ENCODE measurements at regions of chr15 and their contacts with region 1.

Region 1: DNA sequence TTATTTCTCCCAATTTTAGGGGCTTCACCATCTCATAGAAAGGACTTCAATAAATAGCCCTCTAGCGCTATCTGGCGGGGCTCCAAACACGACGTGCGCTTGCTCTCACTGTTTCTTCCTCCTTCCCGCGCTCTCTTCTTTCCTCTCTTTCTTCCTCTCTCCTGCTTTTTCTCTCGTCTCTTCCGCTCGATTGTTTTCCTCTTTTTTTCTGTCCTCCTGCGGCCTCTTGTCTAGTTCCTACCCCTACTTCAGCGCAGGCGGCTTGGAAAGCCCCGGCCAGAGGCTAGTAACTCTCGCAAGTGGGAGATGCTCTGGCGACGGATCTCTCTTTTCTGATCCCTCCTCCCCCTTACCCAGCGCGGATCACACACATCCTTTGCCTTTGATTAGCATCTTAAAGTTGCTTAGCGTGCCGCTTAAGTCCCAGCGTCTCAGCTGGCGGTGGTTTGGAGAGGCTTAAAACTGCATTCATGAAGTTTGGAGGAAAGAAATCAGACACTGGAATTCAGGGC is 6.2 kb upstream of the MEIS2 start:
- DNase-seq: no peak
- H3K4me3 ChIP-seq: peak overlapping the region; percentile 74 to 92
- H3K27ac ChIP-seq: peak overlapping the region; percentile 99
- H3K4me1 ChIP-seq: peaks cover 2 to 10% of the 10 kb centered on the region in 2 experiments; a peak in 2 of 4 replicates
- H3K27me3 ChIP-seq: no peaks in the 10 kb centered on the region
- CTCF ChIP-seq: peak; percentile 61
- EP300 ChIP-seq: no peak
- RAD21 ChIP-seq: peak; percentile 61

Region 2: GRCh38 chr15:37019479-37020433 is 86.8 kb before region 1 on chr15:
- CTCF ChIA-PET with region 1: no interaction called
- POLR2A ChIA-PET with region 1: no interaction called
- DNase-seq: peak; percentile 14
- H3K4me3 ChIP-seq: no peak overlapping the region
- H3K27ac ChIP-seq: peak overlapping the region; percentile 33 to 81
- H3K4me1 ChIP-seq: peaks cover 0 to 34% of the 10 kb centered on the region in 2 experiments; a peak in 3 of 4 replicates
- H3K27me3 ChIP-seq: no peaks in the 10 kb centered on the region
- CTCF ChIP-seq: no peak
- EP300 ChIP-seq: no peak
- RAD21 ChIP-seq: no peak

Region 3: GRCh38 chr15:37093480-37094332 is 12.8 kb before region 1 on chr15:
- CTCF ChIA-PET with region 1: interaction called, 11 read pairs
- POLR2A ChIA-PET with region 1: interaction called, 23 read pairs
- DNase-seq: no peak
- H3K4me3 ChIP-seq: peak overlapping the region; percentile 74 to 92
- H3K27ac ChIP-seq: peak overlapping the region; percentile 93 to 99
- H3K4me1 ChIP-seq: peaks cover 0 to 4% of the 10 kb centered on the region in 2 experiments; a peak in 2 of 4 replicates
- H3K27me3 ChIP-seq: no peaks in the 10 kb centered on the region
- CTCF ChIP-seq: no peak
- EP300 ChIP-seq: 0 out of 4 replicates have a peak, but pooled peaks of 1 of the 2 experiments have one; percentile 22
- RAD21 ChIP-seq: no peak

Region 4: DNA sequence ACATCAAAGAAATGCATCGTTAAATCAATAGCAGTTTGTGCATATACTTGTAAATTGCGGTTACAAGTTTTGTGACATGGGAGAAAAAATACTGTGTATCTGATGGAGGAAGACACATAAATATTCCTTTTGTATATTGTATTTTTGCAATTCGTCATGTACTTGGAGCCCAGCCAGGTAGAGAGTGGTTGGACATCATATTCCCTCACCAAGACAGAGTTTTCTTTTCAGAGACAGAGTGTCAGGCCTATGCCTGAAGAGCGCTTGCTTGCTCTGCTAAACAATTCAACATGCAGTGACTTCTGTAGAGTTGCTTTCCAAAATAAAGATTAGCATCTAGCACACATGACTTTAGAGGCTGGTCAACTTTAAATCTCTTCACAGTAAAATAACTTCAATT is 18.6 kb after region 1 on chr15:
- CTCF ChIA-PET with region 1: interaction called, 9 read pairs
- POLR2A ChIA-PET with region 1: interaction called, 20 read pairs
- DNase-seq: no peak
- H3K4me3 ChIP-seq: peak overlapping the region in 1 of 2 experiments; percentile 3; a peak in 1 of 4 replicates
- H3K27ac ChIP-seq: peak overlapping the region; percentile 57 to 95
- H3K4me1 ChIP-seq: peaks cover 17 to 42% of the 10 kb centered on the region in 2 experiments; a peak in 2 of 4 replicates
- H3K27me3 ChIP-seq: no peaks in the 10 kb centered on the region
- CTCF ChIP-seq: no peak
- EP300 ChIP-seq: peak; percentile 51 to 91
- RAD21 ChIP-seq: peak; percentile 3; the same call in 1 of the 2 replicates

Region 5: GRCh38 chr15:37220949-37221670 is 114.6 kb after region 1 on chr15:
- CTCF ChIA-PET with region 1: interaction called, 3 read pairs
- POLR2A ChIA-PET with region 1: interaction called, 26 read pairs
- DNase-seq: peak; percentile 18
- H3K4me3 ChIP-seq: peak overlapping the region; percentile 11 to 35; a peak in 2 of 4 replicates
- H3K27ac ChIP-seq: peak overlapping the region; percentile 36 to 100; a peak in 3 of 4 replicates
- H3K4me1 ChIP-seq: peaks cover 3 to 40% of the 10 kb centered on the region in 2 experiments; a peak in 2 of 4 replicates
- H3K27me3 ChIP-seq: no peaks in the 10 kb centered on the region
- CTCF ChIP-seq: no peak
- EP300 ChIP-seq: peak; percentile 19 to 97
- RAD21 ChIP-seq: peak; percentile 12; the same call in 1 of the 2 replicates

Measured in SK-N-SH (cell line).